Right ventricle myocardium superior (tissue), 1 donor: ENCODE measurements at regions of chr18 and their contacts with region 1.

Region 1: GRCh38 chr18:36015629-36016028 is 43.1 kb downstream of the RMP24 start:
- DNase-seq: no peak
- ATAC-seq: no peak

Region 2: GRCh38 chr18:36095936-36096519 is 80.4 kb after region 1 on chr18:
- intact Hi-C with region 1: loop called (anchors 5 kb)
- DNase-seq: no peak
- ATAC-seq: peak; percentile 43